ENCODE measurements at regions of chr1 and their contacts with region 1.

Region 1: DNA sequence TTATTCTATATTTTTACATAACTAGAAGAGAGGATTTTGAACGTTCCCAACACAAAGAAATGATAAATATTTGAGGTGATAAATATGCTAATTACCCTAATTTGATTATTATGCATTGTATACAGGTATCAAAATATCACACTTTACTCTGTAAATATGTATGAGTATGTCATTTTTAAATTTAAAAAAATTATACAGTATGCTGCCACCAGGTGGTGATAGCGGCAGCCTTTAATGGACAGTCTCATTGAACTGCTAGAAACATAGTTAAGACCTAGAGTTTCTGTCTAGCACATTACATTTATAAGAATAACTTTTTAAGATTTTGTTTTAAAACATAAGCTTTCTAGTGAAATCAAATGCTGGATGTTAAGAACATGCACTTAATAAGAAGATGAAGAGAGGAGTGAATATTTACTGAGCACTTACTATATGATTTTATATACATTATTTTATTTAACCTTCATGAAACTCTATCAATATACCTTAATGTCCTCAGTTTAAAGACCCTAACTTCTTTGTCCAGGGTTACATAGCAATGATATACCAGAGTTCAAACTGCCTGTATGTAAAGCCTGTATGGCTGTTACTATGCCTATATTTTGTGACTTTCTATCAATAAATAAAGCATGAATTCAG is 207.1 kb downstream of the NUF2 start:
- DNase-seq: no peak
- ATAC-seq: no peak
- H3K4me3 ChIP-seq: no peak overlapping the region
- H3K27ac ChIP-seq: no peak overlapping the region
- H3K4me1 ChIP-seq: no peaks in the 10 kb centered on the region
- H3K27me3 ChIP-seq: no peaks in the 10 kb centered on the region

Region 2: GRCh38 chr1:162847839-162848453 is 680.9 kb before region 1 on chr1:
- intact Hi-C with region 1: loop called in 1 of 2 experiments (anchors 10 kb)
- DNase-seq: peak; percentile 84 to 93
- ATAC-seq: peak; percentile 78
- H3K4me3 ChIP-seq: no peak overlapping the region
- H3K27ac ChIP-seq: no peak overlapping the region
- H3K4me1 ChIP-seq: no peaks in the 10 kb centered on the region
- H3K27me3 ChIP-seq: no peaks in the 10 kb centered on the region

Region 3: DNA sequence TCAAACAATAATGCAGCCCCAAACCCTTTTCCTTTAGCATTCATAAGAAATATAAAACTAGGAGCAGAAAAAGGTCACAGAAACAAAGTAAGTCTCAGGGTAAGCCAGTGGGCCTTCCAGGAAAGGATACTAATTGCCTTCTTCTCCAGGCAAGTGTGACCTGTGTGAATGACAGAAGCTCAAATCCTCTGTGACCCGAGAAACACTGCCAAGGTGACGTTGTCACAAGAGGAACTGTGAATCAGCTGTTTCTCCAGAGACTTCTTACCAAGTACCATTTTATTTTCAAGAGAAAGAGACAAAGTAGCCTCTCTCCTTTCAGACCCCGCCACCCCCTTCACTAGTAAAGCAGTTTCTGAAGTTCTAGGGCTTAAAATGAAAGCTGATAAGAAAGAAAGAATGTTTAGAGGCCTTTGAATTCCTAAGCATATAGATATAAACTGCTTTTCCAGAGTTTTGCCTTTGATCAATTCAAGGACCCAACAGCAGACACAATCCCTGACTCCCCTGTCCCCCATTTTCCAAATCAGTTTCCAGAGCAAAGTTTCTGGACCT is 51.5 kb before region 1 on chr1:
- intact Hi-C with region 1: no loop called
- DNase-seq: no peak
- ATAC-seq: no peak
- H3K4me3 ChIP-seq: no peak overlapping the region
- H3K27ac ChIP-seq: no peak overlapping the region
- H3K4me1 ChIP-seq: no peaks in the 10 kb centered on the region
- H3K27me3 ChIP-seq: no peaks in the 10 kb centered on the region

Region 4: DNA sequence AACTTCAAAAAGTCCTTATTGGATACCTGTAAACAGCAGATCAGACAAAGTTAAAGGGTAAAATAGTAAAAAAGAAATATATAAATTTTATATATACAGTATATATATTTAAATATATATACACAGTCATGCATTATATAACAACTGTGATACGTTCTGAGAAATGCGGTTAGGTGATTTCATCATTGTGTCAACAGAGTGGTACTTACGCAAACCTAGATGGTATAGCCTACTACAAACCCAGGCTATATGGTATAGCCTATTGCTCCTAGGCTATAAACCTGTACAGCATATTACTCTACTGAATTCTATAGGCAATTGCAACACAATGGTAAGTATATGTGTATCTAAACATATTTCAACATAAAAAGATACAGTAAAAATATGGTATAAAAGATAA is 15.6 kb after region 1 on chr1:
- intact Hi-C with region 1: no loop called
- DNase-seq: no peak
- ATAC-seq: no peak
- H3K4me3 ChIP-seq: no peak overlapping the region
- H3K27ac ChIP-seq: no peak overlapping the region
- H3K4me1 ChIP-seq: no peaks in the 10 kb centered on the region
- H3K27me3 ChIP-seq: no peaks in the 10 kb centered on the region

Region 5: DNA sequence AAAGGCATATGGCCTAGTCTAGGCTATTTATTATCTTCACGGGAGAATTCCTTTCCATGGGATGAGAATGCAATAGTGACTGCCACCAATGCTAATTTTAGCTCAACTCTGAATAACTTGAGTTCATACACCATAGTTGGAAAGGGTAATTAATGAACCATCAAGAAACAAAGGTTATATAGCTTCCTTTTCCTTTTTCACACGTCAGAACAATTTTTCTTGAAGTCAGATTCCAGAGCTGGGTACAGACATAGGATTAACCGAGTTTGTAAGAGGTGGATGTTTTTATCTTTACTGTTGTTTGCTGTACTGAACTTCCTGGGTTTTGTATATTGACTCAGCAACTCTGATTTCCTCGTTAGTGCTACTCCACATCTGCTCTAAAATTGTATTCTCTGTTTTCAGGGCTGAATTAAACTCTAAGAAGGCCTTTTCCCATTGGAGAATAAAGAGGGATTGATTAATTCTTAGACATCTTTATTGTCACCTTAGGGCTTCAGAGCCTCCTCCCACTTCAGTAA is 54.9 kb after region 1 on chr1:
- intact Hi-C with region 1: no loop called
- DNase-seq: no peak
- ATAC-seq: no peak
- H3K4me3 ChIP-seq: no peak overlapping the region
- H3K27ac ChIP-seq: no peak overlapping the region
- H3K4me1 ChIP-seq: no peaks in the 10 kb centered on the region
- H3K27me3 ChIP-seq: no peaks in the 10 kb centered on the region

Region 6: DNA sequence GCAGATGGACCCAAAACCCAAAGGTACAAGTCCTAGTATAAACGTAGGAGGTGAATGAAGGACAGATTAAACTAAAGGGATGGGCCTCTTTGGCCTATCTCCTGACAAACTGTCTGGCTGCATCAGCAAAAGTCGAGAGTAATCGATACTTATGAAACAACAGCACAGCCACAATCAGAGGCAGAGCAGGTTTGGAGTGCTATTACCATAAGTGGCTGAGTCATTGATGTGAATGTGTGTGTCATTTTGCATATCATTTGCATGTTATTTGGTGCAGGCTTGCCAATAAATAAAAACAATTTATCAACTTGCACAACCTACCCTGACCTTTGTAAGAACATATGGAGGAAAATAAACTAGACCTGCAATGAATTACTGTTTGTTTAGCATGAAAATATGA is 76.1 kb after region 1 on chr1:
- intact Hi-C with region 1: no loop called
- DNase-seq: no peak
- ATAC-seq: no peak
- H3K4me3 ChIP-seq: no peak overlapping the region
- H3K27ac ChIP-seq: no peak overlapping the region
- H3K4me1 ChIP-seq: no peaks in the 10 kb centered on the region
- H3K27me3 ChIP-seq: no peaks in the 10 kb centered on the region